WTC11 (cell line): ENCODE measurements at regions of chr20 and their contacts with region 1.

Region 1: DNA sequence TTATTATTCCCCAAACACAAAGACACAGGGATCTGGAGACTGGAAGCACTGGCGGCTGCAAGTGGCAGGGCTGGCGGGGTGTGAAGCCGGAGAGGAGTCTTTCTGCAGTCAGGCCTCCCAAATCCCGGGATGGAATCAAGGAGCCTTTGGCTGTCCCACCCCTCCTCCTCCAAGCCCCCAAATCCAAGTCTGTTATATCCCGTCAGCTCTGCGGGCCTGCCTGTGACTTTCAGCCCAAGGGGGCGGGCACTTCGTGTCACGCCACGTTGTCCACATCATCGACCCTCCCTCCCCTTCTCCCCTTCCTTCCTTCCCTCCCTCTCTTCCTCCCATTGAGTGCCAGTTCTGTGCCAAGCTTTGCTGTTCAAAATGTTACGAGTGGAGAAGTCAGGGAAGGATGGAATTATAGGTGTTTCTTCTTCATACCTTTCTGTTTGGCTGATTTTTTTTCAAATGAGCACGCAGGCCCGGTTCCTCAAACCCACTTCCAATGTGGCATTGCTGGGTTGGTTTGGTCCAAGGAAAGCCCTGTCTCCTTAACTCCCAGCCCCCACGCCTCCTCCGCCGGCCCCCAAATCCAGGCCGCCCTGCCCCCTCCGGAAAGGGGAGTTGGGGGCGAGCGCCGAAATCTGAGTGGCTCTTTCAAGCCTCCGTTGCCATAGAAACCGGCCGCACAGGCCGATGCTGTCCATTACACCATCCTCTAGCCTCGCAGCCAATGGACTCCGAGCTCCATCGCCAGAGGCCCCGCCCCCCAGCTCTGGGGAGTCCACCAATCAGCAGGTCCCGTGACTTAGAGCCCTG is 12.7 kb downstream of the ZCCHC3 start:
- DNase-seq: peak; percentile 99
- ATAC-seq: peak; percentile 98
- H3K4me3 Mint-ChIP-seq: peak overlapping the region; percentile 72
- H3K27ac Mint-ChIP-seq: peak overlapping the region; percentile 100
- H3K4me1 Mint-ChIP-seq: peaks cover 36% of the 10 kb centered on the region
- H3K27me3 Mint-ChIP-seq: peaks cover 5% of the 10 kb centered on the region
- CTCF ChIP-seq: no peak

Region 2: GRCh38 chr20:297098-297924 is 12.7 kb before region 1 on chr20 and contains the start of gene ZCCHC3:
- CTCF ChIA-PET with region 1: interaction called, 35 read pairs
- POLR2A ChIA-PET with region 1: interaction called, 30 read pairs
- DNase-seq: peak; percentile 88
- ATAC-seq: peak; percentile 82
- H3K4me3 Mint-ChIP-seq: peak within 1 kb of the TSS; percentile 100
- H3K27ac Mint-ChIP-seq: peak within 1 kb of the TSS; percentile 100
- H3K4me1 Mint-ChIP-seq: peaks cover 43% of the 10 kb centered on the region
- H3K27me3 Mint-ChIP-seq: peaks cover 37% of the 10 kb centered on the region
- CTCF ChIP-seq: no peak
- total RNA-seq, gene ZCCHC3: 43.6 to 54.1 TPM (median 52.6 TPM) in 3 replicates